ENCODE measurements at regions of chr3 and their contacts with region 1.

Region 1: DNA sequence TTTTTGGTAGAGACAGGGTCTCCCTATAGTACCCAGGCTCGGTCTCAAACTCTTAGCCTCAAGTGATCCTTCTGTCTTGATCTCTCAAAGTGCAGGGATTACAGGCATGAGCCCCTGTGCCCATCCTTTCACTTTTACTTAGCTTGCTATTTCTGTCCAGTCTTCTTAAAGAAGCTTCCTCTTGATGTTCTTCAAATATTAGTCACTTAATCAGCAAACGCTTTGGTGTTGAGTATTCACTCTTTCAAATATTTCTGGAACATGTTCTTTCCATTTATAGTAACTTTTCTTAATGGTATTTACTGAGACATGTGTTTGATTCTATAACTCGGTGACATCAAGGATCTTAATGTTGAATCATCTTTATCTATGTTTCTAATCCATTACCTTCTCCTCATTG is 122.1 kb downstream of the CNTN6 start:
- DNase-seq: no peak
- ATAC-seq: no peak
- H3K4me3 ChIP-seq: no peak overlapping the region
- H3K27ac ChIP-seq: no peak overlapping the region
- H3K4me1 ChIP-seq: no peaks in the 10 kb centered on the region
- H3K27me3 ChIP-seq: peaks cover 0 to 4% (median 0%) of the 10 kb centered on the region in 7 donors
- CTCF ChIP-seq: no peak

Region 2: GRCh38 chr3:1251282-1252060 is 36.5 kb after region 1 on chr3:
- intact Hi-C with region 1: loop called in 1 of 10 experiments (anchors 2 kb)
- DNase-seq: no peak
- ATAC-seq: no peak
- H3K4me3 ChIP-seq: no peak overlapping the region
- H3K27ac ChIP-seq: no peak overlapping the region
- H3K4me1 ChIP-seq: no peaks in the 10 kb centered on the region
- H3K27me3 ChIP-seq: no peaks in the 10 kb centered on the region
- CTCF ChIP-seq: no peak